Mammary epithelial cell (primary cell): ENCODE measurements at regions of chr3 and their contacts with region 1.

Region 1: DNA sequence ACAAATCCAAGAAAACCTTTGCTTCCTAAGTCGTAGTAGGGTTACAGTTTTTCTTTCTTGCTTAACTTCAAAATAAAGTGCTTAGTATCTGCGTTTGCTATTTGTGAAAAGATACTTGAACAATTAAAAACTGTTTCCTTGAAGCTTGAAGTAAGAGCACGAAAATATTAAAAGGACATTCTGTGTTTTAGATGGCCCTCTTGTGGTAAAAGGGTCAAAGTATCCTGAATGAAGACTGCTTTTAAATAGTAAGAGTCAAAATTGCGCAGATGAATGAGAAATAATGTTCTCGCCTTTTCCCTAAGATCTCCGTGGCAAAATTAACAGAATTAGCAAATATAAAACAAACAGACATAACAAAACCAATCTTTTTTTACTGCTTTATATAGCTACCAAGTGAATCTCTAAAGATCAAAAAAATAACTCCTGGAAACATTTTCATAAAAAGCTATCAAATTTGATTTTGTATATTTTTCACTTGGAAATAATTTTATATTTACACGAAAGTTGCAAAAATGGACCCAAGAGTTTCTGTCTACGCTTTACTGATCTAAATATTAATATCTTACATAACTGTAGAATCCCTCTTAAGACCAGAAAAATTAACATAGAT is 175.4 kb downstream of the MBNL1 start:
- DNase-seq: peak; percentile 42
- H3K4me3 ChIP-seq: no peak overlapping the region
- H3K27ac ChIP-seq: no peak overlapping the region
- H3K4me1 ChIP-seq: no peaks in the 10 kb centered on the region
- H3K27me3 ChIP-seq: no peaks in the 10 kb centered on the region
- CTCF ChIP-seq: peak; percentile 49 to 64

Region 2: GRCh38 chr3:152026033-152026556 is 418.0 kb before region 1 on chr3:
- CTCF ChIA-PET with region 1: interaction called, 3 read pairs
- dilution Hi-C with region 1: no loop called
- in situ Hi-C with region 1: no loop called
- intact Hi-C with region 1: loop called (anchors 1 kb)
- DNase-seq: peak; percentile 66
- H3K4me3 ChIP-seq: peak overlapping the region in 1 of 3 experiments; percentile 33
- H3K27ac ChIP-seq: peak overlapping the region; percentile 67
- H3K4me1 ChIP-seq: peaks cover 36% of the 10 kb centered on the region
- H3K27me3 ChIP-seq: no peaks in the 10 kb centered on the region
- CTCF ChIP-seq: peak; percentile 13 to 20

Region 3: GRCh38 chr3:152331018-152331541 is 113.1 kb before region 1 on chr3:
- CTCF ChIA-PET with region 1: no interaction called
- dilution Hi-C with region 1: no loop called
- in situ Hi-C with region 1: no loop called
- intact Hi-C with region 1: loop called (anchors 10 kb)
- DNase-seq: peak; percentile 81
- H3K4me3 ChIP-seq: no peak overlapping the region
- H3K27ac ChIP-seq: peak overlapping the region; percentile 64
- H3K4me1 ChIP-seq: peaks cover 25% of the 10 kb centered on the region
- H3K27me3 ChIP-seq: no peaks in the 10 kb centered on the region
- CTCF ChIP-seq: no peak

Region 4: DNA sequence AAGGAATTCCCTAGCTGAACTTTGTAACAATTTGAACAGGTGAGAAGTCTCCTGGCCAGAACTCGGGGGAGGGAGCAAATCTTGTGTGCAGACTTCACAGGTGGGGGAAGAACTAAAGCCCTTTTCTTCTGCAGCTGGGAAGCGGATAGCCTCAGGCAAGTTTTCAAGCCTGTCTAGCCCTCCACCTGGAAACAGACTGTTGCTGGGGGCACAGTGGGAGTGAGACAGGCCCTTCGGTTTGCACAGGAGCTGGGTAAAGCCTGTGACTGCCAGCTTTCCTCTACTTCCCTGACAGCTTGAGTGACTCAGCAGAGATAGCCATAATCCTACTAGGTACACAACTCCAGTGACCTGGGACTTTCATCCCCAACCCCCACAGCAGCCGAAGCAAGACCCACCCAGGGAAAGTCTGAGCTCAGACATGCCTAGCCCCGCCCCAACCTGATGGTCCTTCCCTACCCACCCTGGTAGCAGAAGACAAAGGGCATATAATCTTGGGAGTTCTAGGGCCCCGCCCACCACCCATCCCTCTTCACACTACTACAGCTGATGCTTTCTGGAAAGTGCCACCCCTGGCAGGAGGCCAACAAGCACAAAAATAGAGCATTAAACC is 1196.7 kb after region 1 on chr3:
- CTCF ChIA-PET with region 1: no interaction called
- dilution Hi-C with region 1: no loop called
- in situ Hi-C with region 1: no loop called
- intact Hi-C with region 1: no loop called
- DNase-seq: no peak
- H3K4me3 ChIP-seq: no peak overlapping the region
- H3K27ac ChIP-seq: no peak overlapping the region
- H3K4me1 ChIP-seq: no peaks in the 10 kb centered on the region
- H3K27me3 ChIP-seq: no peaks in the 10 kb centered on the region
- CTCF ChIP-seq: no peak